ENCODE measurements at regions of chr22 and their contacts with region 1.

Region 1: DNA sequence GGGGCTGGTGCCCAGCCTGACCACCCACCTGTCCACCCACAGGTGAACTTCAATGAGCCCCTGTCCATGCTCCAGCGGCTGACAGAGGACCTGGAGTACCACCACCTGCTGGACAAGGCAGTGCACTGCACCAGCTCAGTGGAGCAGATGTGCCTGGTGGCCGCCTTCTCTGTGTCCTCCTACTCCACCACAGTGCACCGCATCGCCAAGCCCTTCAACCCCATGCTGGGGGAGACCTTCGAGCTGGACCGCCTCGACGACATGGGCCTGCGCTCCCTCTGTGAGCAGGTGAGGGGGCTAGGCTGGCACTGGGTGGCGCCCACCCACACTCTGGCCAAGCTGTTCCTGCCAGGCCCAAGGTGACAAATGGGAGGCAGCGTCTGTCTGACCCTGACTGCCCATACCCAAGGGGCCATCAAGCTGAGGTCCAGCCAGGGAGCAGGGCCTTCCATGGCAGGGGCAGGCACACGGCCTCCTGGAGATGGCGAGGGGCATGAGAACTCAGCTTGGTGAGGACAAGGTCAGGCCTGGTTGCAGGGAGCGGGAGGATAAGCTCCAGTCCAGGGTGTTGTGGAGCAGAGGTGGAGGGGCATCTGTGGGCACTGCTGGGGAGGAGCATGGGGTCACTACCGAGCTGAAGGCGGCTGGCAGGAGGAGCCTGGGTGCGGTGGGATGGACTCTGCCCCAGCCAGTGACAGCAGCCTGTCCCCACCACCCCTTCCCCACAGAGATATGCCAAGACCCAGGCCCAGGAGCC is 77.7 kb downstream of the MORC2 start:
- DNase-seq: peak; percentile 79
- H3K4me3 ChIP-seq: no peak overlapping the region; a peak in 1 of 4 replicates
- H3K27ac ChIP-seq: no peak overlapping the region
- H3K4me1 ChIP-seq: no peaks in the 10 kb centered on the region
- H3K27me3 ChIP-seq: no peaks in the 10 kb centered on the region
- CTCF ChIP-seq: peak; percentile 73
- EP300 ChIP-seq: no peak
- RAD21 ChIP-seq: peak; percentile 64

Region 2: DNA sequence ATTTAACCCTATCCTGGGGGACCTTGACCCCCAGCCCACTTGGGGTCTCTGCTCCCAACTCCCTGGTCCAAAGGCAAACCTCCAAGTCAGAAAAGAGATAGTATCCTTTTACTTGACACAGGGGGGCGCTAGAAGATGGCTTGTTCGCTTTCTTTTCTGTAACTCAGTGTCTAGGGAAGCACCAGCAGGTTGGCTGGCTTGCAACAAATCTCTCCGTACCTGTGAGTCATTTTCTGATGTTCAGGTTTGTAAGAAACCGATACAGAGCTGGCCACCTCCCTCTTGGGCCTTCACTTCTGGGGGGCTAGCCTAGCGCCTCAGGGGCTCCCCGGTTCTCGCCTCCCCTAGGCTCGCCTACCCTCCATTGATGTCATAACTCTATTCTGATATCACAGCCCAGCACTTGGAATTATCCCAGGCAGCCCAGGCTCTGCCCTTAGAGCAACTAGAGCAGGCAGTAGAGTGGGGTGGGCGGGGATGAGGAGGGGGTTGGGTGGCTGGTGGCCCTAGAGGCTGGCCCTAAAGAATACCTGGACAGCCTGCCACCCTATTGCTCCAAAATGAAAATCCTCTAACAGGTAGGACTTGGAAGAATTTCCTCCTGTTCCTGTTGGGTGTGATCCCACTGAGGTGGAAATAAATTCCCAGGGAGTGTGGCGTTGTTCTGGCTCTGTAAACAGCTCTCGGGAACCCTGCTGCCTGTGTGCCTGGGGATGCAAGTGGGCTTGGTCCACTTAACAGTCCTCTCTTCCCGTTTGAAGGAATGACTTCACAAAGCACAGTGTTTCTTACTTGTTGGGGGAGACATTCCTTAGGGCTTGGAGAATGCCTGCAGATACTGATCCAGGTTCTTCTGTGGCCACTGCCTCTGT is 126.8 kb before region 1 on chr22:
- CTCF ChIA-PET with region 1: interaction called, 22 read pairs
- POLR2A ChIA-PET with region 1: no interaction called
- DNase-seq: peak; percentile 72
- H3K4me3 ChIP-seq: no peak overlapping the region; a peak in 1 of 4 replicates
- H3K27ac ChIP-seq: no peak overlapping the region
- H3K4me1 ChIP-seq: no peaks in the 10 kb centered on the region
- H3K27me3 ChIP-seq: no peaks in the 10 kb centered on the region
- CTCF ChIP-seq: peak; percentile 84
- EP300 ChIP-seq: no peak
- RAD21 ChIP-seq: peak; percentile 95

Region 3: DNA sequence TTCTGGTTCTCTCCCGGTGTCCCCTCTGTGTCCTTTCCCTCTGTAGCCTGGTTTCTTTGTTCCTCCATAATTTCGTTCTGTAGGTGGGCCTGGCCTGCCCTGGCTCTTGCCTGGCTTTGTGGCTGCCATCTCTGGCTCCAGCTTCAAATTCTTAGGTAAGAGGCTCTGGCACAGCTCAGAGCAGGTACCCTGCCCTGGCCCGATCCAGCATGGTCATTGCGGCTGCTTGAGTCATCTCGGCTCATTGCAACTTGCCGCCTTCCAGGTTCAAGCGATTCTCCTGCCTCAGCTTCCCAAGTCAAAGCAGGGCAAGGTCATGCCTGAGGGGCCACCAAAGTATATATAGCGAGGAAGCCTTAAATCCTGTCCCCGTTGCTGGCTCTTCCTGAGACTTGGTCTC is 120.1 kb before region 1 on chr22:
- CTCF ChIA-PET with region 1: interaction called, 10 read pairs
- POLR2A ChIA-PET with region 1: no interaction called
- DNase-seq: no peak
- H3K4me3 ChIP-seq: no peak overlapping the region
- H3K27ac ChIP-seq: no peak overlapping the region
- H3K4me1 ChIP-seq: no peaks in the 10 kb centered on the region; a peak in 1 of 4 replicates
- H3K27me3 ChIP-seq: no peaks in the 10 kb centered on the region
- CTCF ChIP-seq: no peak
- EP300 ChIP-seq: no peak
- RAD21 ChIP-seq: no peak

Region 4: DNA sequence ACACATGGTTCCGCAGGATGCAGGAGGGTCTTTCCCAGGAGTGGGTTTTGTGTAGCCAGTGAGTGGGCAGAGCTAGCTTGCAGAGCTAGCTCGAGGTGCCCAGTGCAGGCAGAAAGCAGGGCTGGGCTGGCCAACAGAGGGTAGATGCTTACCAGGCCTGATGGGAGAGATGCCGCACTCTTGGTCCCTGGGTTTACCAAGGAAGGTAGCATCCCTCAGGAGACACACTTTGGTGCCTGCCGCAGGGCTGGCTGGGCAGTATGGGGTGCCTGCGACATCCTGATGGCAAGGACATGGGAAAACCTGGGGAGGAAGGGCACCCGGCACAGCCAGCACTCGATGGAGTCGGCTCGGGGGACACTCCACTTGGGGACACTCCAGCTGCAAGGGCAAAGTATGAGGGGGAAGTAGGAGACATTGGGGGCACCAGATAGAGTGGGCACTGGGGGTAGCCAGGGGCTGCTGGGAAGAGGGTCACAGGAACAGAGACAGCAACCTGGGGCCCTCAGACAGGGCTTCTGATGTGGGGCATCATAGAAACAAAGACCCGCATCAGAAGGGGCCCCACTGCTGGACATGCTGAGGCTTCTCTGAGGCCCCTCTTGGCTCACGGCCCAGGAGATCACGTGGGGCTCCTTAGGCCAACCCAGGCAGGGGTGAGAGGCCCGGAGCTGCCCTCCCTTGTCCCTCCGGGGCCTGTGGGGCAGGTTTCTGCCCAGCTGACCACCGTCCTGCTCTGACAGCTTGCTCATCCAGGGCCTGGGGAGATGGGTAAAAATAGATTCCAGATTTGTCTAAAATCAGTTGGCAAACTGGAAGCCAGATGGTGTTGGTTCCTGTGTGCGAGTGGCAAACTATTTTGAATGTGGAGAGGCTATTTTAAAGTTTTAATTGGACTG is 12.1 kb before region 1 on chr22:
- CTCF ChIA-PET with region 1: interaction called, 14 read pairs
- POLR2A ChIA-PET with region 1: no interaction called
- DNase-seq: peak; percentile 79
- H3K4me3 ChIP-seq: no peak overlapping the region
- H3K27ac ChIP-seq: peak overlapping the region in 1 of 2 experiments; percentile 76; a peak in 2 of 4 replicates
- H3K4me1 ChIP-seq: peaks cover 0 to 73% of the 10 kb centered on the region in 2 experiments; a peak in 1 of 4 replicates
- H3K27me3 ChIP-seq: no peaks in the 10 kb centered on the region
- CTCF ChIP-seq: no peak
- EP300 ChIP-seq: no peak
- RAD21 ChIP-seq: no peak

Region 5: GRCh38 chr22:30902496-30903357 is 11.9 kb after region 1 on chr22:
- CTCF ChIA-PET with region 1: interaction called, 21 read pairs
- POLR2A ChIA-PET with region 1: no interaction called
- DNase-seq: no peak
- H3K4me3 ChIP-seq: no peak overlapping the region
- H3K27ac ChIP-seq: no peak overlapping the region
- H3K4me1 ChIP-seq: no peaks in the 10 kb centered on the region
- H3K27me3 ChIP-seq: no peaks in the 10 kb centered on the region
- CTCF ChIP-seq: no peak
- EP300 ChIP-seq: no peak
- RAD21 ChIP-seq: no peak

Region 6: GRCh38 chr22:31062566-31063230 is 171.8 kb after region 1 on chr22:
- CTCF ChIA-PET with region 1: no interaction called
- POLR2A ChIA-PET with region 1: no interaction called
- DNase-seq: no peak
- H3K4me3 ChIP-seq: no peak overlapping the region
- H3K27ac ChIP-seq: no peak overlapping the region
- H3K4me1 ChIP-seq: no peaks in the 10 kb centered on the region; a peak in 1 of 4 replicates
- H3K27me3 ChIP-seq: no peaks in the 10 kb centered on the region
- CTCF ChIP-seq: no peak
- EP300 ChIP-seq: no peak
- RAD21 ChIP-seq: no peak

Region 7: DNA sequence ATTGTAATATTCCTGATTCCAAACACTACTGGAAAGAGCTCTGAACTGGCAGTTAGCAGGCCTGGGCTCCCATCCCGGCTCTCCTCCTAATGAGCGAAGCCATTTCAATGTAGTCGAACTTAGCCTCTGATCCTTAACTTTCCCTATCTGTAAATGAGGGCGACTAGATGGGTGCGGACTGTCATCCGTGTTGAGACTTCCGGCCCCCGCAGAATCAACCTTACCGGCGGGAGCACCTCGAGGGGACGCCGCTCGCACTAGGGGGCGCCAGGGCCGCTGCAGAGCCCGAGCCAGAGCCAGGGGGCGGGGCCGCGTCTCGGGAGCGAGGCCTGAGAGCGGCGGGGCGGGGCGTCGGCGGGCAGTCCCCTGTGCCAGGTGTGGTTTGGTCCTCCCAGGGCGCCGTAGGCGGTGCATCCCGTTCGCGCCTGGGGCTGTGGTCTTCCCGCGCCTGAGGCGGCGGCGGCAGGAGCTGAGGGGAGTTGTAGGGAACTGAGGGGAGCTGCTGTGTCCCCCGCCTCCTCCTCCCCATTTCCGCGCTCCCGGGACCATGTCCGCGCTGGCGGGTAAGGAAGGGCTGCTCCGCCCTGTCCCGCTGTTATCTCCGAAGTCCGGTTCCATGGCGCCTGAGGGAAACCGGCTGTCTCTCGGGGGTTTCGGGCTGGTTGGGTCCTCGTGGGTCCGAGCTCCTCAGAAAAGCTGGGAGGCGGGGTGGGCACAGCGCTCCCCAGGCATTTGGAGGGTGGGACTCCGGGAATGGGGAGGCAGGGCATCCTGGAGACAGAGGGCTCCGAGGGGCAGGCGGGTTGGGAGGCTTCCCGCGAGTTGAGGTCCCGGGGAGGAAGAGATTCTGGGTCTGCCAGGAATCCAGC is 321.2 kb after region 1 on chr22 and contains the start of gene LIMK2:
- CTCF ChIA-PET with region 1: no interaction called
- POLR2A ChIA-PET with region 1: no interaction called
- DNase-seq: peak; percentile 97
- H3K4me3 ChIP-seq: peak within 1 kb of the TSS; percentile 58 to 84
- H3K27ac ChIP-seq: peak within 1 kb of the TSS; percentile 24 to 48; a peak in 2 of 4 replicates
- H3K4me1 ChIP-seq: peaks cover 0 to 11% of the 10 kb centered on the region in 2 experiments; a peak in 2 of 4 replicates
- H3K27me3 ChIP-seq: no peaks in the 10 kb centered on the region
- CTCF ChIP-seq: peak; percentile 91
- EP300 ChIP-seq: peak in 1 of 2 experiments; percentile 39; a peak in 1 of 4 replicates
- RAD21 ChIP-seq: peak; percentile 74
- polyA plus RNA-seq, gene LIMK2: 9.8 and 10.7 TPM in 2 replicates